ENCODE measurements at regions of chr20 and their contacts with region 1.

Region 1: GRCh38 chr20:31496761-31497295 is 17.4 kb upstream of the HM13 start:
- DNase-seq: no peak
- ATAC-seq: no peak
- H3K4me3 Mint-ChIP-seq: no peak overlapping the region
- H3K27ac Mint-ChIP-seq: no peak overlapping the region
- H3K4me1 Mint-ChIP-seq: no peaks in the 10 kb centered on the region
- H3K27me3 Mint-ChIP-seq: peaks cover 20% of the 10 kb centered on the region
- CTCF ChIP-seq: no peak

Region 2: DNA sequence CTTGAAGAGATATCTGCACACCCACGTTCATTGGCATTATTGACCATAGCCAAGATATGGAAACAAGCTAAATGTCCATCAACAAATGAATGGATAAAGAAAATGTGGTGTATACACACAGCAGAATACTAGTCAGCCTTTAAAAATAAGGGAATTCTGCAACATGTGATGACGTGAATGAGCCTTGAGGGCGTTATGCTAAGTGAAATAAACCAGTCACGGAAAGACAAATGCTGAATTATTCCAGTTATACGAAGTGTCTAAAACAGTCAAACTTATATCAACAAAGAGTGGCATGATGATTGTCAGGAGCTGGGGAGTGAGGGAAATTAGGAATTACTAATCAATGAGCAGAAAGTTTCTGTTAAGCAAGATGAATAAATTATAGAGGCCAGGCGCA is 82.4 kb before region 1 on chr20:
- CTCF ChIA-PET with region 1: no interaction called
- POLR2A ChIA-PET with region 1: no interaction called
- intact Hi-C with region 1: loop called (anchors 2 kb)
- DNase-seq: no peak
- ATAC-seq: no peak
- H3K4me3 Mint-ChIP-seq: no peak overlapping the region
- H3K27ac Mint-ChIP-seq: no peak overlapping the region
- H3K4me1 Mint-ChIP-seq: no peaks in the 10 kb centered on the region
- H3K27me3 Mint-ChIP-seq: peaks cover 3% of the 10 kb centered on the region
- CTCF ChIP-seq: no peak

Region 3: DNA sequence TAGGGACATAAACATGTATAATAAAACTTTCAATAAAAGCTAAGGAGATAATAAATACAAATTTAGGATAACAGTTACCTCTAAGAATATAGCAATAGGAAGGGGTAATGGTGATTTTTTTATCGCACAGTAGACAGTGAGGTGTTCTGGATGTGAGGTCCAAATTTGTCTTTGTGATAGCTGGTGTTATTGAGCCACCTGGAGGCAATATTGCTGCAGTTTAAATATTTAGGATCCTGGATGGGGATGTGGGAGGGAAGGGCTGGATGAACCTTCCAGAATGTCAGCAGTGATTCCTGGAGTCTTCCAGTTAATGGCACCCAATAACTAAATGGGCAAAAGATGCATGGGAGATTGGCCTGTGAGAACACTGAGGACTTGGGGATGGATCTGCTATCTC is 42.5 kb before region 1 on chr20:
- CTCF ChIA-PET with region 1: interaction called, 68 read pairs
- POLR2A ChIA-PET with region 1: no interaction called
- intact Hi-C with region 1: no loop called
- DNase-seq: no peak
- ATAC-seq: no peak
- H3K4me3 Mint-ChIP-seq: no peak overlapping the region
- H3K27ac Mint-ChIP-seq: no peak overlapping the region
- H3K4me1 Mint-ChIP-seq: no peaks in the 10 kb centered on the region
- H3K27me3 Mint-ChIP-seq: peaks cover 6% of the 10 kb centered on the region
- CTCF ChIP-seq: no peak

Measured in activated B cell treated with CpG ODN at 0.5 μM for 24 hours (primary cell).